Right ventricle myocardium inferior (tissue), 1 donor: ENCODE measurements at regions of chr12 and their contacts with region 1.

Region 1: DNA sequence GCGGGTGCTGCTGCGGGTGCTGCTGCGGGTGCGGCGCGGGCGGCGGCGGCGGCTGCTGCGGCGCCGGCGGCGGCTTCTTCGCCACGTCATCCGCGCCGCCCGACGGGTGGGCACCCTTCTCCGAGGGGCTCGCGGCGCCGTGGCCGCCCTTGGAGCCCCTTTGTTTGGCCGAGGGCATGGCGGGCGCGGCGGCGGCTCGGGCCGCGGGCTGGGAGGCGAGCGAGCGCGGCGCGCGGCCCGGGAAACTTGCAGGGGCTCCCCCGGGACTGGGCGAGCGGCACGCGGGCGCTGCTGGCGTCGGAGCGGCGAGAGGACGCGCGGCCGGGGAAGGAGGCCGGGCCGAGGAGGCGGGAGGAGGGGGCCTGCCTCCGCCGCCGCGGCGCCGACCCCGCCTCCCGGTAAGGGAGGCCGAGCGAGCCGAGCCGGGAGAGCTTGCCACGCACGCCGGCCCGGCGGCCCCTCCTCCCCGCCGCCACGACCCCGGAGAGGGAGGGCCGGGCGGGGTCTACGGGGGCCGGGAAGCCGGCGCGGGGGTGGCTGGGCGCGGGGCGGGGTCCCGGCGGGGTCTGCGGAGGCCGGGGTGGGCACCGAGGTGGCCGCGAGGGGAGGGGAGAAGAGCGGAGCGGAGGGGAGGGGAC is at the start of gene CKAP4:
- DNase-seq: peak; percentile 92
- ATAC-seq: peak; percentile 87
- total RNA-seq, gene CKAP4: 40.2 TPM

Region 2: GRCh38 chr12:106271575-106272505 is 24.0 kb after region 1 on chr12:
- intact Hi-C with region 1: loop called (anchors 2 kb)
- DNase-seq: no peak
- ATAC-seq: no peak

Region 3: GRCh38 chr12:106302401-106303201 is 54.8 kb after region 1 on chr12 and contains the start of gene TCP11L2:
- intact Hi-C with region 1: loop called (anchors 2 kb)
- DNase-seq: peak; percentile 96
- ATAC-seq: peak; percentile 86
- total RNA-seq, gene TCP11L2: 93.7 TPM

Region 4: DNA sequence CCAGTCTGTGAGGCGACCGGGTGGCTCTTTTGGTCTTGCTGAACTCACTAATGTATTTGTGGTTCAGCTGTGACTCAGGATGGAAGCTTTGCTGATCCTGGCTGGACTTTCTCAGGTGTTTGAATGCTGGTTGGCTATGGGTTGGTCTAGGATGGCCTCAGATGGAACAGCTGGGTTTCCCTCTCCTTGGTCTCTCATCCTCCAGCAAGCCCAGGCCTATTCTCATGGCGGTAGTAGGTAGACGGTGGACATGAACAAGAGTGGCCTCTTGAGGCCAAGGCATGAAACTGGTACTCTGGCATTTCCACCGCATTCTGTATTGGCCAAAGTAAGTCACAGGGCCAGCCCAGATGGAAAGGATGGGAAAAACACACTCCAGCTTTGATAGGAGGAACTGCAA is 97.9 kb after region 1 on chr12:
- intact Hi-C with region 1: loop called (anchors 5 kb)
- DNase-seq: no peak
- ATAC-seq: peak; percentile 32

Region 5: DNA sequence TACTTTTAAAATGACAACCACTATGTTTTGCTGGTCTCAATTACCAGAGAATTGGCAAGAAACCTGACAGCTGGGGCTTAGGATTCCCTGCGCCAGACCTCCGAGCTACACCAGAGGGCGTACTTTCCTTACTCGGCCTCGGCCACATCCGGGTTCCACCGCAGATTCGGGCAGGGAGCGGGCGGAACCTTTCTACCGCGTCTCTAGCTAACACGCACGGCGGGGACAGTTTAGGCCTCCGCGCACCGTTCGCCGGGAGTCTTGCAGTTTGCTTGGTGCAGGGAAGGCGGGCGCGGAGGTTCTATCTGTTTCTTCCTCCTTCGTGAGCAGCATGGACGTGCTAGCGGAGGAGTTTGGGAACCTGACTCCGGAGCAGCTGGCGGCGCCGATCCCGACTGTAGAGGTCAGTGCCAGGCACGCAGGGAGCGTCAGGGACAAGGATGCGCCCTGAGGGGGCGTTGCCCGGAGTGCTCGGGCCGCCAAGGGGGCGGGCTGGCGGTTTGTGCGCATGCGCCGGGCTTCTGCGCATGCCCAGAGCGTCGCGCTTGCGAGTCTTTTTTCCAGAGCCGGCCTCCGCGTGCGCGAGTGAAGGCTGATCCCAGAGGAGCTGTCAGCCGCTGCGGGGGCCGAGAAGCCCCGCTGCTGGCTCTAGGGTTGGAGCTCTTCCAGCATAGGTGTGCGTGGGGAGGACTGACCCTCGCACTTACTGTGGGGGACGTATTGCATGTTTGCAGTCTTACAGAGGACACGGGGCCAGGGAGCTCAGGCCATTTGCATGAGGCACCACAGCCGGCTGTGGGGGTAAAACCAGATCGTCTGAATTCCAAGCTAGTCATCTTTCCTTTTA is 110.0 kb after region 1 on chr12 and contains the start of gene POLR3B:
- intact Hi-C with region 1: loop called (anchors 5 kb)
- DNase-seq: peak; percentile 97
- ATAC-seq: peak; percentile 95
- total RNA-seq, gene POLR3B: 7.3 TPM